AG04450 (cell line): ENCODE measurements at regions of chr18 and their contacts with region 1.

Region 1: DNA sequence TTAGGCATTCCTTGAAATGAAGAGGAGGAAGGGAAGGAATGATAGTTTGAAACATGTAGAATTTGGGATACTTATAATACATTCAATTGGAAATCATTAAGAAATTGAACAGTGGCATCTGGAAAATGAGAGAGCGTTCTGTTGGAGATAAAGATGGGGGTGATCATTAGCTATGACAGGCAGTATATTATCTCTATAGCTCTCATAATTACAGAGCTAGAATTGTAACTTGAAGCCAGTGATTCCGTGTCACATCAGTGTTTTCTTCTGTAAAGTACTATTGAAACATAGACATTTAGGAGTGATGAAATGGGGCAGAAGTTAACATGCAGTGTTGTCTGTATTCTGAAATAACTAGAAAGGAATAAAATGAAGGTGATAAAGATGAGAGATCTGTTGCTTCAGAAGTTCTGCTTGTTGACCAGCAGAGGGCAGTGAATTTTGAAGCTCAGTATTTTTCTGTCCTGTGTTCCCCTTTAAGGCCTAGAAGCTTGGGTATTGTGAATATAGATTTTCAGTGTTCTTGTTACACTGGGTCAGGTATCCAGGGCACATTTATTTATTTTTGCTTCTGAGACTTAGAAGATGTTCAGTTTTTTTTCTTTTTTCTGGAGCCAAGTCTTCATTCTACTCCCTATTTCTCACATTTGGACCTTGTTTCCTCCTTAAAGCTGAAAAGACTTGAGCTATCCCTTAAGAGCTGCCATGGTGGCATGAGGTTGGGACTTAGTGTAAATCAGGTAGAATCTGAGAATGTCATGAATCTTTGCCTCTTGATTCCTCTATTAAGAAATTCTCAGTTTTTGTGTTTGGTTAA is 157.4 kb downstream of the TAF4B start:
- DNase-seq: no peak
- H3K4me3 ChIP-seq: no peak overlapping the region
- H3K27ac ChIP-seq: no peak overlapping the region
- H3K27me3 ChIP-seq: no peaks in the 10 kb centered on the region
- CTCF ChIP-seq: peak; percentile 74

Region 2: GRCh38 chr18:26307189-26307773 is 76.4 kb before region 1 on chr18:
- CTCF ChIA-PET with region 1: interaction called, 14 read pairs
- POLR2A ChIA-PET with region 1: no interaction called
- DNase-seq: peak; percentile 15
- H3K4me3 ChIP-seq: no peak overlapping the region
- H3K27ac ChIP-seq: no peak overlapping the region
- H3K27me3 ChIP-seq: no peaks in the 10 kb centered on the region
- CTCF ChIP-seq: peak; percentile 76

Region 3: GRCh38 chr18:26370037-26370436 is 13.6 kb before region 1 on chr18:
- CTCF ChIA-PET with region 1: interaction called, 27 read pairs
- POLR2A ChIA-PET with region 1: no interaction called
- DNase-seq: no peak
- H3K4me3 ChIP-seq: no peak overlapping the region
- H3K27ac ChIP-seq: no peak overlapping the region
- H3K27me3 ChIP-seq: no peaks in the 10 kb centered on the region
- CTCF ChIP-seq: no peak

Region 4: DNA sequence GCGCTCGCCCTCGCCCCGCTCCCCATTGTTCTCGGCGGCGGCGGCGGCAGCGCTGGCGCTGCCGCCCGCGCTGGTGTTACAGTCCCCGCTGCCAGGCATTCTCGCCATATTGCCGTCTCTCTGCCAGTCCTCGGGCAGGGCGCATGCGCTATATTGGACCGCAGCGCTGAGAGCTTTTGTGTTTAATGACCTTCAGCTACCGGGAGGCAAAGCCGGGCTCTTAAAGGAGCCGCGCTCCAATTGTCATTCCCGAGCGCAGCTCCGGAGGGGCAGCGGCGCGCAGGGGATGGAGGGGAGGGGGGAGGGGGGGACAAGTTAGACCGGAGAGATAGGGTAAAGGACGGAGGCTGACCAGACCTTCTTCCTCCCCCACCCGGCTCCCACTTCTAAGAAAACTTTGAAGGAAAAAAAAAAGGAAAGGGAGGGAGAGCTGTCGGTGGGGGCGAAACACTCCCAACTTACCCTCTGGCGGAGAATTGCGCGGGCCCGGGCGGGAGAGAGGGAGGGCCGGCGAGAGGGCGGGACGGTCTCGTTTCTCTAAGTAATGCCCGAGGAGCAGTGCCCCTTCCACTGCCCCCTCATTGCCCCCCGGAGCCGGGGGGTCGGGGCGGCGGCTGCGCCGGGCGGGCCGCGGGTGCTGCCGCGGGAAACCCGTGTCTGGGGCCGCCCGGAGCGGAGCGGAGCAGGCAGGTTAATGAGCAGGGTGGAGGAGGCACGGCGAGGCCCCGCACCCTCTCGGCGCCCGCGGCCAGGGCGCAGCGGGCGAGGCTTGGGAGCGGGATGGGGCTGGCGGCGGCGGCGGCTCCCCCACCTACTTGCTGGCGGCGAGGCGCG is 165.0 kb after region 1 on chr18 and contains the start of gene KCTD1:
- CTCF ChIA-PET with region 1: interaction called, 40 read pairs
- POLR2A ChIA-PET with region 1: no interaction called
- DNase-seq: peak; percentile 55
- H3K4me3 ChIP-seq: peak within 1 kb of the TSS; percentile 77
- H3K27ac ChIP-seq: no peak within 1 kb of the TSS
- H3K27me3 ChIP-seq: peaks cover 36% of the 10 kb centered on the region
- CTCF ChIP-seq: no peak
- polyA plus RNA-seq, gene KCTD1: 5.0 and 5.4 TPM in 2 replicates

Region 5: GRCh38 chr18:26650310-26651268 is 266.9 kb after region 1 on chr18:
- CTCF ChIA-PET with region 1: interaction called, 82 read pairs
- POLR2A ChIA-PET with region 1: no interaction called
- DNase-seq: no peak
- H3K4me3 ChIP-seq: no peak overlapping the region
- H3K27ac ChIP-seq: no peak overlapping the region
- H3K27me3 ChIP-seq: peaks cover 23% of the 10 kb centered on the region
- CTCF ChIP-seq: no peak

Region 6: DNA sequence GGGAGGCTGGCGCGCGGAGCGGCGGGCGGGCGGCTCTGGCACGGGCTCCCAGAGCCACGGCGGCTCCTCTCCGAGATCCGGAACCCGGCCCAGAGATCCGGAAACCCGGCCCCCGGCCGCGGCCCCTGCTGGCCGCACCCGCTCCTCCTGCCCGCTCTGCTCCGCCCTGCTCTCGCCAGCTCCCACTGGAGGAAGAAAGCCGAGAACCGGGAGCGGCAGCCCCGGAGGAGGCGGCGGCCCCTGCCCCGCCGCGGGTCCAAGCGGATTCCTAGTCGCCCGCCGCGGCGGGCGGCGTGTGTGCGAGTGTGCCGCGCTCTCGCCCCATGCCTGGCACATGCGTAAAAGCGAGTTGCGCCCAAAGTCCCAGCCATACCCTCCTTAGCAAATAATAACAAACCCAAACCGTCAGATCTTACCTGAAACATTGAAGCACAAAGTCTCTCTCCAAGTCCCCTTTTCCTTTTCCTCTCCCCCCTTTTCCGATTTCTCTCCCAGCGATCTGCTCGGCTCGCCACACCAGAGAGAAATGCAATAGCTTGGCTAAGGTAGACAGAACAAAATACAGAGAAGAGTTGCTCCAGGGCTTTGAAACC is 273.4 kb after region 1 on chr18:
- CTCF ChIA-PET with region 1: interaction called, 82 read pairs
- POLR2A ChIA-PET with region 1: no interaction called
- DNase-seq: peak; percentile 3
- H3K4me3 ChIP-seq: peak overlapping the region; percentile 63
- H3K27ac ChIP-seq: no peak overlapping the region
- H3K27me3 ChIP-seq: peaks cover 48% of the 10 kb centered on the region
- CTCF ChIP-seq: peak; percentile 46